Cardiac septum (tissue), 1 donor: ENCODE measurements at regions of chr1 and their contacts with region 1.

Region 1: DNA sequence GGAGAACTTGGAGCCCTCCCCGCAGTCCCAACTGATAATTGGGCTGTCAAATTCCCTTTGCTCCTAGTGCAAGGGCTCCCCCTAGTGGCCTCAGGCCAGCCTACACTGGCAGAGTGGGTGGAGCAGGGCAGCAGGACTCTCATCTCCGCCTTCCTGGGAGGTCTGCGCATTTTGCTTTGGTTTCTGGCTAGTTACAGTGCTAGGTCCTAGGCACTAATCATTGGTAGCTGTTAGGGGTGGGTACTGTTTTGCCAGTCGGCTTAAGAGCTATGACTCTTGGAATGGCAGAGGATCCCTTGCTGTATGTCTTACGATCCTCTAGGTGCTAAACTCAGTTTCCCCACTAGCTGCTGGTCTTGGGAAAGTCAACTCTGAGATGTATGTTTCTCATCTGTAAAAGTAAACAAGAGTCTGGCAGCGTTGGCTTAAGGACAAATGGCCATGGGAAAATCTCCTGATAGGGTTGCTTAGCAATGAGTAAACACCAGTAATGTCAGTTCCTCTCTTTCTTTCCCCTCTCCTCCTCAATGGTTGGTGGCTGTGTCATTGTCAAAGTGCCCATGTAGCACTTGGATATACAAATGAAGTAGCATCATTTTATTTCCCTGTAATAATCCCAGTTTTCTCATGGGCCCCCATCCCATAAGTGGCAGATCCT is 2.1 kb upstream of the FYB2 start:
- DNase-seq: peak; percentile 78

Region 2: DNA sequence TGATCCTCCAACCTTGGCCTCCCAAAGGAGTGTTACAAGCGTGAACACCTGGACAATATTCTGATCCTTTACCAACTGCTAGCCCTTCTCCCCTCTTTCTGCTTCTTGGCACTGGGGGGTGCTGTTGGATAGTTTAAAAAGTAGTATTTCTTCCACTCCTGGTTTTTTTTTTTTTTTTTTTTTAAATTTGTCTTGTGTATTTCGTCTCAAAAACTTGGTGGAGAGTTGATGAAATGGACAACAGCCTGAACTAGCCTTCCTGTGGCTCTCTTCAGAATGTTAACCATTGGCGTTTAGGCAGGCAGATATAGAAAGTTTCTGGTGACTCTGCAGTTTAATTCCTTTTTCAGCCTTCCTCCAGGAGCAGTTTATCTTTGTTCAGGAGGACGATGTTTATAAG is 1536.4 kb before region 1 on chr1:
- intact Hi-C with region 1: loop called (anchors 5 kb)
- DNase-seq: no peak

Region 3: GRCh38 chr1:56533621-56534020 is 287.6 kb before region 1 on chr1:
- intact Hi-C with region 1: no loop called
- DNase-seq: no peak

Region 4: GRCh38 chr1:56644919-56645676 is 176.2 kb before region 1 on chr1 and contains the start of gene PRKAA2:
- intact Hi-C with region 1: loop called (anchors 5 kb)
- DNase-seq: peak; percentile 79
- total RNA-seq, gene PRKAA2: 143 TPM

Region 5: GRCh38 chr1:56655991-56656613 is 165.2 kb before region 1 on chr1:
- intact Hi-C with region 1: no loop called
- DNase-seq: no peak

Region 6: DNA sequence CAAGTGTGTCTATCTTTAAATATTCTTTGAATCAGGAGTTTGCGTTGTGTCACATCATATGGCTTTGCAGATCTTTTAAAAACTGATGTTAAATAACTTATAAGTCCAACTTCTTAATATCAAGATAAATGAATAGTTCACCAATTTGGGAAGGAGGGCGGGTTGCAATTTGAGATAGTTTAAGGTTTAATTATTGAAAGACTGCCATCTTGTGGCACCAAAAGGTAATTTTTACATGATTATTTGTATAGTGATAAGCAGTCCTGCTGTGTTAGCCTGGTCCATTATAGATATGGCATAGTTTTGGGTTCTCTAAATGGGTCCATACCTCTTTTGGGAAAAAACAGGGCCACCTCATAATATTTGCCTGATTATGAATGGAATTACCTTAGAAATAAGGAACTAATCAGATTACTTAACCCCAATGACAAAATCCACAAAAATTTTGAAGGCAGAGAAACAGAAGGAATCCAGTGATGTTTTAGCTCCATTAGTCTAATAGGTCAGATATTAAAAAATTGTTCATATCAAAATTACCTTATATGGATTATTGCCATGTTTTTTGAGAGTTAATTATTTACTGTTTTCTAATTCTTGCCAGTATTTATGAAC is 111.9 kb before region 1 on chr1:
- intact Hi-C with region 1: loop called (anchors 5 kb)
- DNase-seq: no peak

Region 7: GRCh38 chr1:56758135-56758534 is 63.1 kb before region 1 on chr1:
- intact Hi-C with region 1: loop called (anchors 2 kb)
- DNase-seq: no peak

Region 8: DNA sequence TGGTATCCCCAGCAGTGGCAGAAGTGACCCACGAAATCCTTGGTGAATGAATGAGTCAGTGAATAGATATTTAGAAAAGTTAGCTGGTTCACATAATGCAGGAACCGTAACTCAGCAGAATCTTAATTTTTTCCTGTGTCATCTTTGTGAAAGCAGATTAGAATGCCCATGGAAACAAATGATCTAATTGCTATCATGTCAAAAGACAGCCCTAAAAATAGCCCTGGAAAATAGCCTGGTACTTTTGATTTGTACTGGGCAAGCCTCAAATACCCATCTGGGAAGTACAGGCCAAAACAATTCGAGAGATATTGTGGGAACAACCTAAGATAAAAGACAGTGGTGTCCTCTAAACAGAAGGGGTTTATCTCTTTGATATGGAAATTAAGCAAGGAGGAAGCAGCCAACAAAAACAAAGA is 23.2 kb before region 1 on chr1:
- intact Hi-C with region 1: loop called (anchors 2 kb)
- DNase-seq: no peak